Activated naive CD4-positive, alpha-beta T cell treated with anti-CD3 and anti-CD28 coated beads for 36 hours (primary cell): ENCODE measurements at regions of chr1 and their contacts with region 1.

Region 1: GRCh38 chr1:161766102-161766981 is at the start of gene ATF6:
- DNase-seq: peak; percentile 91
- H3K4me3 Mint-ChIP-seq: peak within 1 kb of the TSS; percentile 96
- H3K27ac Mint-ChIP-seq: peak within 1 kb of the TSS; percentile 97
- H3K4me1 Mint-ChIP-seq: peaks cover 41% of the 10 kb centered on the region
- H3K27me3 Mint-ChIP-seq: no peaks in the 10 kb centered on the region
- total RNA-seq, gene ATF6: 23.5 to 24.6 TPM

Region 2: GRCh38 chr1:161499099-161500039 is 267.0 kb before region 1 on chr1:
- CTCF ChIA-PET with region 1: no interaction called
- intact Hi-C with region 1: no loop called
- DNase-seq: no peak
- H3K4me3 Mint-ChIP-seq: no peak overlapping the region
- H3K27ac Mint-ChIP-seq: no peak overlapping the region
- H3K4me1 Mint-ChIP-seq: peaks cover 7% of the 10 kb centered on the region
- H3K27me3 Mint-ChIP-seq: peaks cover 15% of the 10 kb centered on the region

Region 3: DNA sequence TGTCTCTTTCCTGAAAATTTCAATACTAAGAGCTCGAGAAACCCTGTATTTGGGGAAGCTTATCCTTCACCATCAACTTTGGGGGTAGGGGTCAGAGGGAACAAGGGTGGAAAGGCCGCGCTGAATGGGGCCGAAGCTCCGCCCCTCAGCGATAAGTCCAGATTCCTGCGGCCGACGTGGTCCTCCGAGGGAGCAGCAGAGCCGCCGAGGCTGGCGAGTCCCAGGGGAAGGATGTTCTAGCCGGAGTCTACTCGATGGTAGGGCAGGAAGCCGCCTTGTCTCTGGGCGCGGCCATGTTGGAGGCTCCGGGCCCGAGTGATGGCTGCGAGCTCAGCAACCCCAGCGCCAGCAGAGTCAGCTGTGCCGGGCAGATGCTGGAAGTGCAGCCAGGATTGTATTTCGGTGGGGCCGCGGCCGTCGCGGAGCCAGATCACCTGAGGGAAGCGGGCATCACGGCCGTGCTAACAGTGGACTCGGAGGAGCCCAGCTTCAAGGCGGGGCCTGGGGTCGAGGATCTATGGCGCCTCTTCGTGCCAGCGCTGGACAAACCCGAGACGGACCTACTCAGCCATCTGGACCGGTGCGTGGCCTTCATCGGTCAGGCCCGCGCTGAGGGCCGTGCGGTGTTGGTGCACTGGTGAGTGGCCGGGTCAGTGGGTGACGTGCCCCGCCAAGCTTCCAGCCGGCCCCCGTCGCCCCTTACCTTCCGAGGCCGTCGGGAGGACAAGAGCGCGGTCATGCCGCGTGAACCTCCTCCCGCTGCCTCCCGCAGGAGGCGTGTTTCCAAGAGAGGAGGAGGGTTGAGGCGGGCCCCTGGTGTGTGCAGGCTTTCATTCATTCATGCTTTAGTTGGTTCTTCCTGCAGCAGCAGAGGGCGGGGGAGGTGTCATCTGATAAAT is 16.6 kb before region 1 on chr1 and contains the start of gene DUSP12:
- CTCF ChIA-PET with region 1: interaction called, 18 read pairs
- intact Hi-C with region 1: loop called (anchors 1 kb)
- DNase-seq: peak; percentile 94
- H3K4me3 Mint-ChIP-seq: peak within 1 kb of the TSS; percentile 98
- H3K27ac Mint-ChIP-seq: peak within 1 kb of the TSS; percentile 98
- H3K4me1 Mint-ChIP-seq: peaks cover 45% of the 10 kb centered on the region
- H3K27me3 Mint-ChIP-seq: no peaks in the 10 kb centered on the region
- total RNA-seq, gene DUSP12: 28.2 to 28.4 TPM

Region 4: GRCh38 chr1:161962091-161962887 is 195.9 kb after region 1 on chr1:
- CTCF ChIA-PET with region 1: no interaction called
- intact Hi-C with region 1: loop called (anchors 1 kb)
- DNase-seq: peak; percentile 81
- H3K4me3 Mint-ChIP-seq: peak overlapping the region; percentile 64
- H3K27ac Mint-ChIP-seq: peak overlapping the region; percentile 96
- H3K4me1 Mint-ChIP-seq: peaks cover 61% of the 10 kb centered on the region
- H3K27me3 Mint-ChIP-seq: no peaks in the 10 kb centered on the region

Region 5: DNA sequence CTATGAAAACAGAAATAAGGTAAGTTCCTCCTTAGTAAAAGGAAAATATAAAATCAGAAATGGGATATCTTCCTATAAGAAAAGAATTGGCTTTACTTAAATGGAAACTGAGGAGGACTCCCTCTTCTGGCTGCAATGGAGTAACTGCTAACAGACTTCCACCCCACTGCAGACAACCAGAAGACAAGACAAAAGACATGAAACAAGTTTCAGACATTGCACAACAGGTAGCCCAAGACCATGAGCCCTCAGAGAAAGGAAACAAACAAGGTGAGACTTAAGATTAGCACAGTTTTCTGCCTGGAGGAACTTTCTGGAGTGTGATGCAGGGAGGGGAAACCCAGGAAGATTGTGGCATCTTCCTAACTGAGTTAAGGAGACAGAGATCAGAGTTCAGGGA is 274.3 kb after region 1 on chr1:
- CTCF ChIA-PET with region 1: interaction called, 32 read pairs
- intact Hi-C with region 1: loop called (anchors 1 kb)
- DNase-seq: no peak
- H3K4me3 Mint-ChIP-seq: no peak overlapping the region
- H3K27ac Mint-ChIP-seq: no peak overlapping the region
- H3K4me1 Mint-ChIP-seq: peaks cover 4% of the 10 kb centered on the region
- H3K27me3 Mint-ChIP-seq: peaks cover 6% of the 10 kb centered on the region

Region 6: GRCh38 chr1:162561037-162561616 is 794.8 kb after region 1 on chr1:
- CTCF ChIA-PET with region 1: no interaction called
- intact Hi-C with region 1: loop called (anchors 5 kb)
- DNase-seq: peak; percentile 98
- H3K4me3 Mint-ChIP-seq: peak overlapping the region; percentile 92
- H3K27ac Mint-ChIP-seq: peak overlapping the region; percentile 91
- H3K4me1 Mint-ChIP-seq: peaks cover 35% of the 10 kb centered on the region
- H3K27me3 Mint-ChIP-seq: no peaks in the 10 kb centered on the region